ENCODE measurements at regions of chr1 and their contacts with region 1.

Region 1: GRCh38 chr1:167936068-167936929 is at the start of gene DCAF6:
- DNase-seq: peak; percentile 97
- ATAC-seq: peak; percentile 84
- H3K4me3 Mint-ChIP-seq: peak within 1 kb of the TSS; percentile 89
- H3K27ac Mint-ChIP-seq: peak within 1 kb of the TSS; percentile 97
- H3K4me1 Mint-ChIP-seq: peaks cover 34% of the 10 kb centered on the region
- H3K27me3 Mint-ChIP-seq: no peaks in the 10 kb centered on the region
- total RNA-seq, gene DCAF6: 25.6 to 28.8 TPM

Region 2: DNA sequence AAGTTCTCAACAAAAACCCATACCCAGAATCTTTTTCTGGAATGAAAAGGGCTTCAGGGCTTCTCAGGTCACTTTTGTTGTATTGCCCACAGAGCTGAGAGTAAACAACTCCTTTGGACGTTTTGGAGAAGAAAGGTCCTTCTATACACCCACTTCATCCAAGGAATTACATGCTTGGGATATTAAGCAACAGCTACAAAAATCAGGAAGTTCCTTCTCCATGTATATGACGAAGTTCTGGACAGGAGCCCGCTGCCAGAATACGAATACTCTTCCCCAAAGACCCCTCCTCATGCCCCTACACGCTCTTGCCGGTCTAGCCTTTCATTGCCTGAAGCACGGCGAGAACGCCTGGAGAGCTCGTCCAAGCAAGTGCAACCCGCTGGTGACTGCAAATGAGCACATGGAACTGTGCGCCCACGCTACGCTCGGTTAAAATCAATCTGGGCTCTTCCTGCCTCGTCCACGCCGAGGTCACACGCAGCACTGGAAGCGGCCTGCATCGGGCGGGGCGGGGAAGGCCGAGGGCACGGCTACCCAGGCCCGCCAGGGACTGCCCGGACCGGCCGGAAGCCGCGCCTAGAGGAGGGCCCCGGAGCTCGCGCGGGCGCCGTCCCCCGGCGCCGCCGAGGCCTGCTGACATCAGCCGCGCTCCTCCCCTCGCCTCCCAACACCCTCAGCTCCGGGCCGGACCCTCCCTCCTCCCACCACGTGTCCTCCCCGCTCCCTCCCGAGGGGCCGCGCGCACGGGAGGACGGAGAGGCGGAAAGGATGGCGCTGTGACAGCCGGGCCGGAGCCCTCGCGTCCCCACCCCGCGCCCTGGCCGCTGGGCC is 1097.3 kb before region 1 on chr1 and contains the start of gene POGK:
- CTCF ChIA-PET with region 1: no interaction called
- POLR2A ChIA-PET with region 1: no interaction called
- intact Hi-C with region 1: loop called in 1 of 2 experiments (anchors 10 kb)
- DNase-seq: peak; percentile 93
- ATAC-seq: peak; percentile 97
- H3K4me3 Mint-ChIP-seq: peak within 1 kb of the TSS; percentile 90
- H3K27ac Mint-ChIP-seq: peak within 1 kb of the TSS; percentile 98
- H3K4me1 Mint-ChIP-seq: peaks cover 56% of the 10 kb centered on the region
- H3K27me3 Mint-ChIP-seq: no peaks in the 10 kb centered on the region
- total RNA-seq, gene POGK: 36.2 to 40.6 TPM

Region 3: GRCh38 chr1:167627865-167628641 is 308.2 kb before region 1 on chr1:
- CTCF ChIA-PET with region 1: no interaction called
- POLR2A ChIA-PET with region 1: no interaction called
- intact Hi-C with region 1: loop called (anchors 1 to 10 kb)
- DNase-seq: peak; percentile 87
- ATAC-seq: peak; percentile 85
- H3K4me3 Mint-ChIP-seq: peak overlapping the region; percentile 85
- H3K27ac Mint-ChIP-seq: peak overlapping the region; percentile 98
- H3K4me1 Mint-ChIP-seq: peaks cover 53% of the 10 kb centered on the region
- H3K27me3 Mint-ChIP-seq: no peaks in the 10 kb centered on the region

Region 4: DNA sequence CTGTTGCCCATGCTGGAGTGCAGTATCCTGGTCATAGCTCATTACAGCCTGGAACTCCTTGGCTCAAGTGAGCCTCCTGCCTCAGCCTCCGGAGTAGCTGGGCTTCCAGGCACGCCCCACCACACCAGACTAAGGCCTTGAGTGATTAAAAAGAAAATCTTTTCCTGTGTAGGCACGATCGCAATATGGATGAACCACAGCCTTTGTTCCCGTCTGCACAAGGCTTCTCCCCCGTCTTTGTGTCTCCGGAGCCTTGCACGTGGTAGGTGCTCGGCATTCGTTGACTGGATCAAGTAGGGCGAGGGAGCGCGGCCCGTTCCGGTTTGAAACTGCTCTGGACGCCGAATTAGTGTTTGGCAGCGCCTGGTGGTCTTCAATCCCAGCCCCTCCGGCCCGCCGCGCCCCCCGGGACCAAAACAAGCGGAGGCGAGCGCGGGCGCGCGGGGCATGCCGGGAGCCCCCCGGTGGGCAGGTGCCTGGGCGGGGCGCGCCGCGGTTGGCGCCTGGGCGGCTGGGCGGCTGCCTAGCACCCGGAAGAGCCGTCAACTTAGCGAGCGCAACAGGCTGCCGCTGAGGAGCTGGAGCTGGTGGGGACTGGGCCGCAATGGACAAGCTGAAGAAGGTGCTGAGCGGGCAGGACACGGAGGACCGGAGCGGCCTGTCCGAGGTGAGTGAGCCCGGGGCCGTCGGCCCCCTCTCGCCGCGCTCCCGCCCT is 289.3 kb after region 1 on chr1 and contains the start of gene SFT2D2:
- CTCF ChIA-PET with region 1: no interaction called
- POLR2A ChIA-PET with region 1: interaction called, 4 read pairs
- intact Hi-C with region 1: loop called in 1 of 2 experiments (anchors 1 kb)
- DNase-seq: peak; percentile 88
- ATAC-seq: peak; percentile 90
- H3K4me3 Mint-ChIP-seq: peak within 1 kb of the TSS; percentile 86
- H3K27ac Mint-ChIP-seq: peak within 1 kb of the TSS; percentile 86
- H3K4me1 Mint-ChIP-seq: peaks cover 49% of the 10 kb centered on the region
- H3K27me3 Mint-ChIP-seq: peaks cover 3% of the 10 kb centered on the region
- total RNA-seq, gene SFT2D2: 25.2 to 42.3 TPM

Region 5: GRCh38 chr1:168408536-168409242 is 472.4 kb after region 1 on chr1:
- CTCF ChIA-PET with region 1: no interaction called
- POLR2A ChIA-PET with region 1: no interaction called
- intact Hi-C with region 1: loop called in 1 of 2 experiments (anchors 5 kb)
- DNase-seq: peak; percentile 79
- ATAC-seq: peak; percentile 90
- H3K4me3 Mint-ChIP-seq: peak overlapping the region; percentile 10
- H3K27ac Mint-ChIP-seq: peak overlapping the region; percentile 86
- H3K4me1 Mint-ChIP-seq: peaks cover 37% of the 10 kb centered on the region
- H3K27me3 Mint-ChIP-seq: no peaks in the 10 kb centered on the region